ENCODE measurements at regions of chr12 and their contacts with region 1.

Region 1: GRCh38 chr12:57476162-57476992 is 3.3 kb downstream of the ARHGAP9 start:
- DNase-seq: peak; percentile 67
- H3K4me3 Mint-ChIP-seq: peak overlapping the region; percentile 93
- H3K27ac Mint-ChIP-seq: peak overlapping the region; percentile 97
- H3K4me1 Mint-ChIP-seq: peaks cover 54% of the 10 kb centered on the region
- H3K27me3 Mint-ChIP-seq: no peaks in the 10 kb centered on the region

Region 2: DNA sequence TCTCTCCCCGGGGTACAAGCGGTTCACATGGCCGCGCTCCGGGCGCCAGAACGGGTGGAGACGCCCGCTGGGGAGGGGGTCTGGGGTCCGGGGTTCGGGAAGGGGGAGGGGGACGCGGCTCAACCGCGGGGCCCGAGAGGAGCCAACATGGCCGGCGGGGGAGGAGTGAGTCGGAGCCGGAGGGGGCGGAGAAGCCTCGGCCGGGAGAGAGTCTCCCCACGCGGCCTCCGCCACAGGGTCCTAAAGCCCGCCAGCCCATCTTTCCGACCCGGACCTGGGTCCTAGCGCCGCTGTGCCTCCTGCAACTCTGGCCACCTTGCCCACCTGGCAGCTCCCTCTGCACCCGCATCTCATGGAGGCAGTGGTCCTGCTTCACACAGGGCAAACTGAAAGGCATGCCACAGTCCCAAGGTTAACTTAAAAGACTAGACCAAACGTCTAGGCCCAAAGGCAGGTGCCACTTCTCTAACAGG is 846.2 kb before region 1 on chr12 and contains the start of gene BAZ2A:
- intact Hi-C with region 1: loop called (anchors 5 kb)
- DNase-seq: peak; percentile 85
- H3K4me3 Mint-ChIP-seq: peak within 1 kb of the TSS; percentile 97
- H3K27ac Mint-ChIP-seq: peak within 1 kb of the TSS; percentile 89
- H3K4me1 Mint-ChIP-seq: peaks cover 72% of the 10 kb centered on the region
- H3K27me3 Mint-ChIP-seq: no peaks in the 10 kb centered on the region
- total RNA-seq, gene BAZ2A: 119 and 126 TPM in 2 replicates

Region 3: GRCh38 chr12:57078519-57079404 is 397.6 kb before region 1 on chr12 and contains the start of gene NEMP1:
- intact Hi-C with region 1: loop called (anchors 2 kb)
- DNase-seq: peak; percentile 97
- H3K4me3 Mint-ChIP-seq: peak within 1 kb of the TSS; percentile 89
- H3K27ac Mint-ChIP-seq: peak within 1 kb of the TSS; percentile 92
- H3K4me1 Mint-ChIP-seq: peaks cover 16% of the 10 kb centered on the region
- H3K27me3 Mint-ChIP-seq: no peaks in the 10 kb centered on the region
- total RNA-seq, gene NEMP1: 70.2 and 71.7 TPM in 2 replicates

Region 4: GRCh38 chr12:57487597-57488401 is 11.4 kb after region 1 on chr12 and contains the start of gene MARS1:
- intact Hi-C with region 1: loop called (anchors 1 kb)
- DNase-seq: peak; percentile 91
- H3K4me3 Mint-ChIP-seq: peak within 1 kb of the TSS; percentile 97
- H3K27ac Mint-ChIP-seq: peak within 1 kb of the TSS; percentile 96
- H3K4me1 Mint-ChIP-seq: peaks cover 33% of the 10 kb centered on the region
- H3K27me3 Mint-ChIP-seq: no peaks in the 10 kb centered on the region
- total RNA-seq, gene MARS1: 283 and 318 TPM in 2 replicates

Region 5: GRCh38 chr12:57590536-57591479 is 114.4 kb after region 1 on chr12 and contains the start of gene PIP4K2C:
- intact Hi-C with region 1: loop called (anchors 5 kb)
- DNase-seq: peak; percentile 77
- H3K4me3 Mint-ChIP-seq: peak within 1 kb of the TSS; percentile 90
- H3K27ac Mint-ChIP-seq: peak within 1 kb of the TSS; percentile 75
- H3K4me1 Mint-ChIP-seq: peaks cover 31% of the 10 kb centered on the region
- H3K27me3 Mint-ChIP-seq: no peaks in the 10 kb centered on the region
- total RNA-seq, gene PIP4K2C: 22.8 and 25.7 TPM in 2 replicates

Measured in activated T-helper 1 cell treated with anti-CD3 and anti-CD28 coated beads, Interleukin-12 subunit alpha, Interleukin-12 subunit beta, Interleukin-2, Interleukin-4 antibody, amounts not matched to agents 30 ng/mL and 10 ng/mL and 1 ng/mL, durations not matched to agents 14 hours and 24 hours and 36 hours (primary cell).